SK-N-SH (cell line): ENCODE measurements at regions of chr13 and their contacts with region 1.

Region 1: DNA sequence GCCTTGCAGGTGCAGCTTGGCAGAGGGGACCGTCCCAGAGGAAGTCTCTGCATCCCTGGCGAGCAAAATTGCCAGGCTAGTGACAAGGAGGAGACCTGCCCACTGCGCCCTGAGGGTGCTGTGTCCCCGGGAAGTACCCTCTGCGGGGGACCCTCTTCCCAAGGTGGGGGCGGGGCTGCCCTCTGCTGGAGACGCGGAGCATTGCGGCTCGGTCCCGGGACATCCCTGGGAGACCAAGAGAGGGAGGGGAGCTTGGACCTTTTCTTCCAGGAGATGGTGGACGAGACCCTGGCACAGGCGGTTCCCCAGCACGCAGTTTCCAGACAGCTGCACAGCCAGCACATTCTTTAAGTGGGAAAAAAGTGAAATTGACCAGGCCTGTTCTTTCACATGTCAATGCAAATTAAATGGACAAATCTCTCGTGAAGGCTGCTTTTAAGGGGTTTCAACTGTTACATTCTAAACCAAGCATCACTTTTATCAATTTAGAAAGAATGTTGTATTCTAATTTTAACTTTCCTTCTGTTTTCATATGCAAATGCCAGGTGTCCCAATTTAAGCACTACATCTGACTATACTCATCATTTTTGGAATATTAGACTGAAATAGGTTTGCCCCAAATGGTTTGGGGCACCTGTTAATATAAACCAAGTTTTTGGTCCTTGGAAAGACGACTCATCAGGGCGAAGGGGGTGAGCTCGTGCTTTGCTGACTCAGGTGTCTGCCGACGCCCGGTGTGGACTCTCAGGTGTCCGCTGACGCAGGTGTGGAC is 60.7 kb downstream of the MCF2L start:
- DNase-seq: peak; percentile 92
- H3K4me3 ChIP-seq: no peak overlapping the region; a peak in 1 of 4 replicates
- H3K27ac ChIP-seq: no peak overlapping the region
- H3K4me1 ChIP-seq: peaks cover 0 to 20% of the 10 kb centered on the region in 2 experiments; a peak in 1 of 4 replicates
- H3K27me3 ChIP-seq: peaks cover 4% of the 10 kb centered on the region; the same call in 1 of the 2 replicates
- CTCF ChIP-seq: peak; percentile 75
- EP300 ChIP-seq: no peak
- RAD21 ChIP-seq: peak; percentile 77

Region 2: GRCh38 chr13:112956571-112957294 is 72.9 kb before region 1 on chr13:
- CTCF ChIA-PET with region 1: interaction called, 13 read pairs
- POLR2A ChIA-PET with region 1: no interaction called
- DNase-seq: no peak
- H3K4me3 ChIP-seq: no peak overlapping the region
- H3K27ac ChIP-seq: no peak overlapping the region
- H3K4me1 ChIP-seq: no peaks in the 10 kb centered on the region
- H3K27me3 ChIP-seq: peaks cover 15% of the 10 kb centered on the region; the same call in 1 of the 2 replicates
- CTCF ChIP-seq: no peak
- EP300 ChIP-seq: no peak
- RAD21 ChIP-seq: no peak

Region 3: DNA sequence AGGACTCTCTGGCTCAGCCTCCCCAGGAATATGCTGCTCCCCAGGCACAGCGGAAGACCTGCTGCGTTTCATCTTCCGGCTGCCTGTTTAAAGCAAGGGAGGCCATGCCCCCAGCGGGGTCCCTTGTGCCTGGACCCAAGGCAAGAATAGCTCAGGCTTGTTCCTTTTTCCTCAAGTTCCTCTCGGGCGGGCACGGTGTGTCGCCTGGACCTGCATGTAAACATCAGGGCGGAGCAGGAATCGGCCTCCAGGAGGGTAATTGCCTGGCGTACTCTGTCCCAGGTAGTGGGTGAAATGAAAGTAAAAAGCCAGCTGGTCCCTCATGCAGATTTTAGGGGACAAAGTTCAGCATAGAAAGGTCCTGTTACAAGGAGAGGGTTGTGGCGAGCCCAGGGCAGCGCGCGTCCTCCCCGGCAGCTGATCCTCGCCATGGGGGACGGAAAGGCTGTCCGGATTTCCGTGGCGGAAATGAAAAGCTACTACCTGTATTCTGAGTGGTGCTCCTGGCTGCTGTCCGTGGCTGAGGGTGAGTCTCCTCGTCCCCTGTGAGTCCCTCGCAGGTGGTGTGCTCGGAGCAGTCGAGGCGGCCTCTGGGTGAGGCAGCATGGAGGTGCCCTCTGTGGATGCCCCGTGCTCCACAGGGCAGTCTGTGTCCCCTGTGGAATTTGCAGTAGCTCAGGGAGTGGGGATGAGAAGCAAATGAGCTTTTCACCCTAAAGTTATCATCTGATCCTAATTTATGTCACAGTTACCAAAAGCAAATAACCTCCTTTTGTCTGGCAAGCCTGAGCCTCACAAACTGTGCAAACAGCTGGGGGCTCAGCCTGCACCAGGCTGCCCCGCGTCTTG is 44.5 kb before region 1 on chr13:
- CTCF ChIA-PET with region 1: interaction called, 16 read pairs
- POLR2A ChIA-PET with region 1: no interaction called
- DNase-seq: no peak
- H3K4me3 ChIP-seq: no peak overlapping the region
- H3K27ac ChIP-seq: peak overlapping the region in 1 of 2 experiments; percentile 28; a peak in 1 of 4 replicates
- H3K4me1 ChIP-seq: peaks cover 0 to 63% of the 10 kb centered on the region in 2 experiments; a peak in 1 of 4 replicates
- H3K27me3 ChIP-seq: no peaks in the 10 kb centered on the region
- CTCF ChIP-seq: no peak
- EP300 ChIP-seq: no peak
- RAD21 ChIP-seq: no peak

Region 4: GRCh38 chr13:113001241-113002140 is 28.2 kb before region 1 on chr13:
- CTCF ChIA-PET with region 1: interaction called, 28 read pairs
- POLR2A ChIA-PET with region 1: interaction called, 3 read pairs
- DNase-seq: peak; percentile 95
- H3K4me3 ChIP-seq: peak overlapping the region; percentile 46 to 52
- H3K27ac ChIP-seq: peak overlapping the region in 1 of 2 experiments; percentile 91; a peak in 2 of 4 replicates
- H3K4me1 ChIP-seq: peaks cover 0 to 47% of the 10 kb centered on the region in 2 experiments; a peak in 2 of 4 replicates
- H3K27me3 ChIP-seq: peaks cover 4% of the 10 kb centered on the region; the same call in 1 of the 2 replicates
- CTCF ChIP-seq: no peak
- EP300 ChIP-seq: peak in 1 of 2 experiments; percentile 43; a peak in 1 of 4 replicates
- RAD21 ChIP-seq: no peak; the same call in 1 of the 2 replicates

Region 5: GRCh38 chr13:113044391-113045114 is 14.9 kb after region 1 on chr13:
- CTCF ChIA-PET with region 1: interaction called, 11 read pairs
- POLR2A ChIA-PET with region 1: no interaction called
- DNase-seq: no peak
- H3K4me3 ChIP-seq: no peak overlapping the region
- H3K27ac ChIP-seq: no peak overlapping the region
- H3K4me1 ChIP-seq: no peaks in the 10 kb centered on the region; a peak in 1 of 4 replicates
- H3K27me3 ChIP-seq: no peaks in the 10 kb centered on the region
- CTCF ChIP-seq: no peak
- EP300 ChIP-seq: no peak
- RAD21 ChIP-seq: no peak